Activated CD4-positive, alpha-beta T cell treated with anti-CD3 and anti-CD28 coated beads, Interleukin-2, amount 10 ng/mL, durations not matched to agents 7 days and 5 days (primary cell): ENCODE measurements at regions of chr18 and their contacts with region 1.

Region 1: GRCh38 chr18:54269893-54270844 is 852 bp downstream of the POLI start:
- DNase-seq: peak; percentile 63
- H3K4me3 Mint-ChIP-seq: peak overlapping the region; percentile 83
- H3K27ac Mint-ChIP-seq: peak overlapping the region; percentile 98
- H3K4me1 Mint-ChIP-seq: peaks cover 39% of the 10 kb centered on the region
- H3K27me3 Mint-ChIP-seq: no peaks in the 10 kb centered on the region

Region 2: GRCh38 chr18:53426656-53427184 is 843.4 kb before region 1 on chr18:
- CTCF ChIA-PET with region 1: no interaction called
- POLR2A ChIA-PET with region 1: no interaction called
- DNase-seq: no peak
- H3K4me3 Mint-ChIP-seq: no peak overlapping the region
- H3K27ac Mint-ChIP-seq: no peak overlapping the region
- H3K4me1 Mint-ChIP-seq: no peaks in the 10 kb centered on the region
- H3K27me3 Mint-ChIP-seq: no peaks in the 10 kb centered on the region

Region 3: GRCh38 chr18:54223568-54224241 is 46.5 kb before region 1 on chr18:
- CTCF ChIA-PET with region 1: interaction called, 11 read pairs
- POLR2A ChIA-PET with region 1: interaction called, 5 read pairs
- DNase-seq: peak; percentile 43
- H3K4me3 Mint-ChIP-seq: peak overlapping the region; percentile 94
- H3K27ac Mint-ChIP-seq: peak overlapping the region; percentile 96
- H3K4me1 Mint-ChIP-seq: peaks cover 47% of the 10 kb centered on the region
- H3K27me3 Mint-ChIP-seq: no peaks in the 10 kb centered on the region

Region 4: GRCh38 chr18:54284981-54285785 is 15.0 kb after region 1 on chr18:
- CTCF ChIA-PET with region 1: interaction called, 10 read pairs
- POLR2A ChIA-PET with region 1: no interaction called
- DNase-seq: peak; percentile 43
- H3K4me3 Mint-ChIP-seq: no peak overlapping the region
- H3K27ac Mint-ChIP-seq: peak overlapping the region; percentile 55
- H3K4me1 Mint-ChIP-seq: peaks cover 19% of the 10 kb centered on the region
- H3K27me3 Mint-ChIP-seq: no peaks in the 10 kb centered on the region